ENCODE measurements at regions of chr13 and their contacts with region 1.

Region 1: GRCh38 chr13:44435142-44435982 is 61.7 kb downstream of the SERP2 start:
- DNase-seq: peak; percentile 99
- H3K4me3 ChIP-seq: peak overlapping the region; percentile 64 to 86 (median 74)
- H3K27ac ChIP-seq: peak overlapping the region; percentile 85 to 96 (median 92)
- H3K4me1 ChIP-seq: peaks cover 0 to 35% (median 18%) of the 10 kb centered on the region in 4 donors
- H3K27me3 ChIP-seq: no peaks in the 10 kb centered on the region
- CTCF ChIP-seq: no peak
- EP300 ChIP-seq: peak in 2 of 4 donors; percentile 64 to 66
- POLR2A ChIP-seq: peak; percentile 49 to 91

Region 2: GRCh38 chr13:44050450-44051063 is 384.8 kb before region 1 on chr13:
- intact Hi-C with region 1: loop called (anchors 1 kb)
- DNase-seq: no peak
- H3K4me3 ChIP-seq: no peak overlapping the region
- H3K27ac ChIP-seq: peak overlapping the region in 1 of 4 donors; percentile 52
- H3K4me1 ChIP-seq: peaks cover 0 to 31% (median 27%) of the 10 kb centered on the region in 4 donors
- H3K27me3 ChIP-seq: no peaks in the 10 kb centered on the region
- CTCF ChIP-seq: peak; percentile 60 to 86 (median 72)
- EP300 ChIP-seq: no peak
- POLR2A ChIP-seq: no peak

Region 3: GRCh38 chr13:44218501-44219240 is 216.7 kb before region 1 on chr13:
- intact Hi-C with region 1: loop called (anchors 1 kb)
- DNase-seq: peak; percentile 85
- H3K4me3 ChIP-seq: no peak overlapping the region
- H3K27ac ChIP-seq: peak overlapping the region; percentile 63 to 87 (median 78)
- H3K4me1 ChIP-seq: peaks cover 0 to 61% (median 52%) of the 10 kb centered on the region in 4 donors
- H3K27me3 ChIP-seq: no peaks in the 10 kb centered on the region
- CTCF ChIP-seq: no peak
- EP300 ChIP-seq: peak in 1 of 4 donors; percentile 28
- POLR2A ChIP-seq: no peak

Region 4: GRCh38 chr13:44306401-44307192 is 128.8 kb before region 1 on chr13:
- intact Hi-C with region 1: loop called (anchors 2 kb)
- DNase-seq: peak; percentile 90
- H3K4me3 ChIP-seq: no peak overlapping the region
- H3K27ac ChIP-seq: peak overlapping the region; percentile 76 to 90 (median 86)
- H3K4me1 ChIP-seq: peaks cover 0 to 99% (median 91%) of the 10 kb centered on the region in 4 donors
- H3K27me3 ChIP-seq: no peaks in the 10 kb centered on the region
- CTCF ChIP-seq: no peak
- EP300 ChIP-seq: peak; percentile 44 to 93 (median 85)
- POLR2A ChIP-seq: no peak

Region 5: DNA sequence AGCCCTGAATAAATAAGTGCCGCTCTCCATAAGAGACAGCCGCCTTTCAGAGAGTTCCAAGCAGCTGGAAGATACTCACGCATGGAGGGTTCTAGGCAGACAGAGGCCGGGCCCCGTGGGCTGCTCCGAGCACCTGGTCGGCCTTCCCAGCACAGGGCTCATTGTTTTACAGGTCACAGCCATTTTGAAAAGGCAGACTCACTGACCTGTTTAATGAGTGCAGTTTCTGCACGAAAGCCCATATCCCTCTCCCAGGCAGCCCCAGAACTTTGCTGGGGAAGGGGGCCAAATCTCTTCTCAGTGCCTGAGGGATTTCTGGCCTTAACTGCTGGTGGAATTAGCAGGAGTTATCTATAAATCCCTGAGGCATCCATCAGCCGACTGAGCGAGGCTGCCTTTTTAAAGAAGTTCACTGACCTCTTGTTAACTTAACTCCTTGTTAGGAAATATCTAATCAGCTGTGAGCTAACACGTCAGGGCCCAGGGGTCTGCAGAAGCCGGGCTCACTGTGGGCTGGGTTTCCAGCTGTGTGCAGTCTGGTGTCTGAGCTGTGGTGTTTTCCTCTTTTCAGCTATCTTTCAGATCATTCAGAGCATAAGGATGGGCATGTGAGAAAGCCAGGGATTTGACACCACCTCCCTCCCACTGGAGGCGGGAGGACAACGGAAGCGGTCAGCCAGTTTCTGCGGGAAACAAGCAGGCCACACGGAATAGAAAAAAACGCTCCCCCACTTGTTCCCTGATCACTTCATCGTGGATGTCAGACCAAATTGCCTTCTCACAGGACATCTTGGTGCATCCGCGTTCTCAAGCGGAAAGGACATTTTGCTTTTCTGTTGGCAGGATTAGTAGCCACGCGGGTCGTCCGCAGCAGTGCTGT is 38.4 kb before region 1 on chr13:
- intact Hi-C with region 1: no loop called
- DNase-seq: peak; percentile 61
- H3K4me3 ChIP-seq: no peak overlapping the region
- H3K27ac ChIP-seq: peak overlapping the region; percentile 5 to 43 (median 22)
- H3K4me1 ChIP-seq: peaks cover 0 to 5% (median 0%) of the 10 kb centered on the region in 4 donors
- H3K27me3 ChIP-seq: no peaks in the 10 kb centered on the region
- CTCF ChIP-seq: no peak
- EP300 ChIP-seq: no peak
- POLR2A ChIP-seq: no peak

Region 6: GRCh38 chr13:44583137-44583536 is 147.8 kb after region 1 on chr13:
- intact Hi-C with region 1: no loop called
- DNase-seq: no peak
- H3K4me3 ChIP-seq: no peak overlapping the region
- H3K27ac ChIP-seq: no peak overlapping the region
- H3K4me1 ChIP-seq: peaks cover 0 to 6% (median 6%) of the 10 kb centered on the region in 4 donors
- H3K27me3 ChIP-seq: no peaks in the 10 kb centered on the region
- CTCF ChIP-seq: no peak
- EP300 ChIP-seq: no peak
- POLR2A ChIP-seq: no peak

Measured in sigmoid colon (tissue), 7 donors.